Ascending aorta (tissue), 2 donors: ENCODE measurements at regions of chr5 and their contacts with region 1.

Region 1: GRCh38 chr5:41270423-41271251 is 57.3 kb upstream of the C6 start:
- DNase-seq: peak in 1 of 2 donors; percentile 64
- H3K4me3 ChIP-seq: no peak overlapping the region
- H3K27ac ChIP-seq: no peak overlapping the region
- H3K4me1 ChIP-seq: no peaks in the 10 kb centered on the region
- H3K27me3 ChIP-seq: no peaks in the 10 kb centered on the region
- CTCF ChIP-seq: peak; percentile 47 to 76 (median 64)

Region 2: GRCh38 chr5:40904205-40904993 is 366.2 kb before region 1 on chr5:
- intact Hi-C with region 1: loop called (anchors 10 kb)
- DNase-seq: peak in 1 of 2 donors; percentile 73
- H3K4me3 ChIP-seq: no peak overlapping the region
- H3K27ac ChIP-seq: peak overlapping the region; percentile 18 to 41
- H3K4me1 ChIP-seq: peaks cover 0 to 8% of the 10 kb centered on the region in 2 donors
- H3K27me3 ChIP-seq: no peaks in the 10 kb centered on the region
- CTCF ChIP-seq: peak; percentile 49 to 81 (median 75)

Region 3: DNA sequence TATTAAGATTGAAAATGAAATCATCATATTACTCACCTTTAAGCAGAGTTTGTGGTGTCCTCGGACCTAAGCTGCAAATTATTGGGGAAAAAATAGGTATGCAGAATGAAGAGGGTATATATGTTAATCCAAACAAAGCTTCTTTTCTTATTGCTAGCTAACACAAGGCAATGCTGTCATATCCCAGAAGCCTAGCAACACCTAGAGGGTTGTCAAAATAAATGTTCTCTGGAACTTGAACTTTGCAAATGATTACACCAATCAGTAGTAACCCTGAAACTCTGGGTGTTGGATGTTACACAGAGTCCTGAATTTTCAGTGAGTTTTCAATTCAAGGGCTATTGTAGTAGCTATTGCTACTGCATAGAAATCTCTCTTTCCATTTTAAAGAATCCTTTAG is 57.3 kb before region 1 on chr5 and contains the start of gene C6:
- intact Hi-C with region 1: no loop called
- DNase-seq: no peak
- H3K4me3 ChIP-seq: no peak within 1 kb of the TSS
- H3K27ac ChIP-seq: no peak within 1 kb of the TSS
- H3K4me1 ChIP-seq: no peaks in the 10 kb centered on the region
- H3K27me3 ChIP-seq: no peaks in the 10 kb centered on the region
- CTCF ChIP-seq: no peak
- total RNA-seq, gene C6: 1.9 TPM

Region 4: GRCh38 chr5:41234475-41234874 is 36.2 kb before region 1 on chr5:
- intact Hi-C with region 1: no loop called
- DNase-seq: no peak
- H3K4me3 ChIP-seq: no peak overlapping the region
- H3K27ac ChIP-seq: no peak overlapping the region
- H3K4me1 ChIP-seq: no peaks in the 10 kb centered on the region
- H3K27me3 ChIP-seq: no peaks in the 10 kb centered on the region
- CTCF ChIP-seq: no peak

Region 5: DNA sequence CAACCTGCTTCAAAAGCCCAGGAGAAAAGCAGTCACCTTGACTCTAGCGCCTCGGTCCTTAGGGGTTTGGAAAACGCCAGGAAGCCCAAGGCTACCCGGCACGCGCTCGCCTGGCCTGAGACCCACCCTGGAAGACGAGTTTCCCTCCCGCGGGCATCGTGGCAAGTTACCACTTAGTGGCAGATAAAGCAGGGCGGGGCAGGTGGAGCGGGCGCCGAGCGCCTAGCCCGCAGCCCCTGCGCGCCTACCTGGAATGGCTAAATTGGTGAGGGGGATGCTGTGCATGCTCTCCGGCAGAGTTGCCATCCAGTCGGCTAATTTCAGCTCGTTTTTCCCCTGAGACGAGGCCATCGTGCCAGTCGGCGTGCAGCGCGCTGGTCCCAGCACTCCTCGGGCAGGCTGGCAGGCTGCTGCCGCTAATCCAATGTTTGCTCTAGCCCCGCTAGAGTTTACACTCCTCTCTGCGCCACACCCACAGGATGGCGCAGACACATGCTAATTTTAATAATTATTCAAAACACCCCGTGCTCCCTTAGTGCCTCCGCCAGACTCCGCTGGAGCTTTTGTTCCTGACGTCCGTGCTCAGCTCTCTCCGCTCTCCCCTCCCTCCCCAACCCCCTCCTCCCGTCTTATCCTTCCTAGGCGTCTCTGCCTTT is 239.7 kb after region 1 on chr5 and contains the start of gene PLCXD3:
- intact Hi-C with region 1: loop called (anchors 5 kb)
- DNase-seq: peak in 1 of 2 donors; percentile 63
- H3K4me3 ChIP-seq: peak within 1 kb of the TSS; percentile 57 to 86
- H3K27ac ChIP-seq: no peak within 1 kb of the TSS
- H3K4me1 ChIP-seq: no peaks in the 10 kb centered on the region
- H3K27me3 ChIP-seq: no peaks in the 10 kb centered on the region
- CTCF ChIP-seq: no peak
- total RNA-seq, gene PLCXD3: 7.2 TPM

Region 6: GRCh38 chr5:41649659-41650058 is 379.0 kb after region 1 on chr5:
- intact Hi-C with region 1: loop called (anchors 5 kb)
- DNase-seq: no peak
- H3K4me3 ChIP-seq: no peak overlapping the region
- H3K27ac ChIP-seq: no peak overlapping the region
- H3K4me1 ChIP-seq: peaks cover 0 to 17% of the 10 kb centered on the region in 2 donors
- H3K27me3 ChIP-seq: no peaks in the 10 kb centered on the region
- CTCF ChIP-seq: no peak